Naive thymus-derived CD4-positive, alpha-beta T cell (primary cell): ENCODE measurements at regions of chr2 and their contacts with region 1.

Region 1: GRCh38 chr2:196291873-196292800 is 120.8 kb upstream of the STK17B start:
- DNase-seq: no peak
- ATAC-seq: peak; percentile 47
- H3K4me3 ChIP-seq: no peak overlapping the region
- H3K4me3 Mint-ChIP-seq: peak overlapping the region in 1 of 10 donors; percentile 31
- H3K27ac ChIP-seq: no peak overlapping the region
- H3K27ac Mint-ChIP-seq: peak overlapping the region in 3 of 9 donors; percentile 2 to 51 (median 44)
- H3K4me1 ChIP-seq: peaks cover 6 to 10% of the 10 kb centered on the region in 2 donors
- H3K4me1 Mint-ChIP-seq: peaks cover 21 to 56% (median 42%) of the 10 kb centered on the region in 7 donors
- H3K27me3 ChIP-seq: no peaks in the 10 kb centered on the region
- H3K27me3 Mint-ChIP-seq: no peaks in the 10 kb centered on the region

Region 2: DNA sequence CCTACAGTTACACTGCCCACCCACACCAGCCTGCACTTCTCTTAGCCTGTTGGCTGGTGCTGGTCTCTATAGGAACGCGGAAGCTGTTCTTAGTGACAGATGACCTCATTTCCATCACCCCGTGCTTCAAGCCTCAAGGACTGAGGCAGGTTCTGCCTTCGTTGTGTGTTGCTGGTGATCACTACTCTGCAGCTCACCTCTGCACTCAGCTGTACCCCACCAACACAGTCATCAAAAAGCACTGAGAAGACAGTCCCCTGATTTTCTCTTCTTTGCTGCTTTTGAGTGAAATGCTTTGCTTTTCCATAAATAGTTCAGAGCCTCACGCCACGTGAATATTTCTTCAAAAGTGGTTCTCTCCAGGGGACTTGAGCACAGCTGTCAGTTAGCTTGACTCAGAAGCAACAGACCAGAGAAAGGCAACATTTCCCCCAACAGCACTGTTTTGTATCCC is 121.7 kb after region 1 on chr2:
- CTCF ChIA-PET with region 1: no interaction called
- POLR2A ChIA-PET with region 1: no interaction called
- intact Hi-C with region 1: no loop called
- DNase-seq: no peak
- ATAC-seq: no peak
- H3K4me3 ChIP-seq: no peak overlapping the region
- H3K4me3 Mint-ChIP-seq: no peak overlapping the region
- H3K27ac ChIP-seq: no peak overlapping the region
- H3K27ac Mint-ChIP-seq: no peak overlapping the region
- H3K4me1 ChIP-seq: peaks cover 0 to 5% of the 10 kb centered on the region in 2 donors
- H3K4me1 Mint-ChIP-seq: peaks cover 6 to 16% (median 9%) of the 10 kb centered on the region in 7 donors
- H3K27me3 ChIP-seq: peaks cover 0 to 3% of the 10 kb centered on the region in 2 donors
- H3K27me3 Mint-ChIP-seq: peaks cover 4 to 20% (median 15%) of the 10 kb centered on the region in 5 donors

Region 3: GRCh38 chr2:196453613-196454047 is 161.5 kb after region 1 on chr2:
- CTCF ChIA-PET with region 1: no interaction called
- POLR2A ChIA-PET with region 1: no interaction called
- intact Hi-C with region 1: loop called in 1 of 2 experiments (anchors 5 kb)
- DNase-seq: peak in 7 of 9 donors; percentile 2 to 39 (median 19)
- ATAC-seq: peak; percentile 60
- H3K4me3 ChIP-seq: no peak overlapping the region
- H3K4me3 Mint-ChIP-seq: no peak overlapping the region
- H3K27ac ChIP-seq: no peak overlapping the region
- H3K27ac Mint-ChIP-seq: no peak overlapping the region
- H3K4me1 ChIP-seq: no peaks in the 10 kb centered on the region
- H3K4me1 Mint-ChIP-seq: peaks cover 0 to 6% (median 0%) of the 10 kb centered on the region in 7 donors
- H3K27me3 ChIP-seq: peaks cover 0 to 6% of the 10 kb centered on the region in 2 donors
- H3K27me3 Mint-ChIP-seq: peaks cover 25 to 42% (median 31%) of the 10 kb centered on the region in 5 donors

Region 4: DNA sequence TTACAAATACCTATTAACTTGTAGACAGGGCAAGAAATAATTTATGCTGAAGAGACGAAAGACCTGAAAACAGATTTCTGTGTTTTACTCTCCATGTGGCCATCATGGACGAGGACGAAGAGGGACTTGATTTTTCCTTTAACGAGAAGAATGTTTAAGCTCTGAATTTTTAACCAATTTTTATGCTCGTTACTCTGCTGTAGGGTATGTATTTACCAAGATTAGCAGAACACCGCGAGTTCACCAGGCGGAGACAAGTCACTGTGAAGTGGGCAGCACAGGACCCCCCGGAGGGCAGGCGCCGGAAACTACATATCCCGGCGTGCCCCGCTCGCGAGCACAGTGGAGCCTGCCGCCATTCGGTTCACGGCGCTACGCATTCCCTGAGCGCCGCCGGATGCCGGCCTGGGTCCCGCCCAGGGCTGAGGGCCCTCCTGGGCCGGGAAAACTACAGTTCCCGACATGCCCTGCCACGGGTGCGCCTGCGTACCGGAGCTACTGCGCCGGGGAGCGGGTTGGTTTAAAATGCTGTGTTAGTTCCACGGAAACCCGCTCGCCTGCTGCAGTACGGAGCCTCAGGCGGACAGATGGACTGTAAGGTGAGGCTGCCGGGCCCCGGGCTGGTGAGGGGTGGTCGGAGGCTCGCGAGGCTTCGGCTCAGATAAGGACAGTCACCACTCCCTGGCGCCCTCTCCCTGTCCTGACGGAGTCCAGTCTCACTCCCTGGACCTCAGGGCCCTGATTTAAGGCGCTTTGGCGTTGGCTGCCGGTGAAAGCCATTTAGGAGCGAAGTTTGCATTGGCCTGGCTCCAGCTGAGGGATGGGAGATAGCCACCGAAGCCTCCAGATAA is 347.3 kb after region 1 on chr2 and contains the start of gene CCDC150:
- CTCF ChIA-PET with region 1: no interaction called
- POLR2A ChIA-PET with region 1: no interaction called
- intact Hi-C with region 1: loop called in 1 of 2 experiments (anchors 10 kb)
- DNase-seq: peak; percentile 88 to 95 (median 94)
- ATAC-seq: peak; percentile 100
- H3K4me3 ChIP-seq: peak within 1 kb of the TSS; percentile 86
- H3K4me3 Mint-ChIP-seq: peak within 1 kb of the TSS; percentile 82 to 92 (median 88)
- H3K27ac ChIP-seq: peak within 1 kb of the TSS; percentile 48
- H3K27ac Mint-ChIP-seq: peak within 1 kb of the TSS in 8 of 9 donors; percentile 30 to 78 (median 43)
- H3K4me1 ChIP-seq: peaks cover 7 to 8% of the 10 kb centered on the region in 2 donors
- H3K4me1 Mint-ChIP-seq: peaks cover 4 to 26% (median 19%) of the 10 kb centered on the region in 7 donors
- H3K27me3 ChIP-seq: no peaks in the 10 kb centered on the region
- H3K27me3 Mint-ChIP-seq: peaks cover 0 to 15% (median 0%) of the 10 kb centered on the region in 5 donors
- total RNA-seq, gene CCDC150: 0.13 to 11.2 (median 1.2) TPM